Activated naive CD4-positive, alpha-beta T cell treated with anti-CD3 and anti-CD28 coated beads, Interleukin-2, amount 10 ng/mL, durations not matched to agents 7 days and 5 days (primary cell): ENCODE measurements at regions of chr14 and their contacts with region 1.

Region 1: DNA sequence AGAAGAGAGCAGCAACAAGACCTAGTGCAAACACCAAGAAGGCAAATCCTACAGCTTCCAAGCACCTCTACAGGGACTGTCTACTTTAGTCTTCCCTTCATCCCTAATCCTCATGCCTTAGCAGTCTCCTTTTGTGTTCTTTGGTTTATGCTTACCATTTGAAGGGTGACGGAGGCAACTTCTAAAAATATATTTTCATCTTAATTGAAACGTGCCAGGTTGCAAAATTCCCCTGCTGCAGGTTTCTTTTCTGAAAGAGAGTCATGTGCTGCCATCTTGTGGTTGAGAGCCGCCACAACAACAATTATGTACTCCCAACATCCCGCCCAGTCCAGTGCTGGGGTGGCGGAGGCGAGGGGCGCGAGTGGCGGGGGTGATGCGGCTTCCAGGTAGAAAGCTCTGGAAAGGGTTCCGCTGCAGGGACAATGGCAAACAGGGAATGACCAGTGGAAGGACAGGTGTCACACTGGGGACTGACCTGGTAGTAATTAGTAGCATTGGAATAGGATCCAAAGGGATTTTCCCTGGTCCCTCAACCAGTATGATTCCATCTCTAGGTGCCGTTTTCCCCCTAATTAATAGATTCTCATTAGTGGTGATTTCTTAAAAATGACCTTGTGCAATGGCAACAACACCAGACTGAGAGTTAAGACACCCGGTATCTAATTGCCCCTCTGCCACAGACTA is 80.3 kb upstream of the GNG2 start:
- DNase-seq: peak; percentile 81
- H3K4me3 Mint-ChIP-seq: no peak overlapping the region
- H3K27ac Mint-ChIP-seq: no peak overlapping the region
- H3K4me1 Mint-ChIP-seq: peaks cover 20% of the 10 kb centered on the region
- H3K27me3 Mint-ChIP-seq: peaks cover 39% of the 10 kb centered on the region

Region 2: GRCh38 chr14:51283402-51284085 is 496.6 kb before region 1 on chr14:
- CTCF ChIA-PET with region 1: interaction called, 46 read pairs
- DNase-seq: no peak
- H3K4me3 Mint-ChIP-seq: no peak overlapping the region
- H3K27ac Mint-ChIP-seq: no peak overlapping the region
- H3K4me1 Mint-ChIP-seq: no peaks in the 10 kb centered on the region
- H3K27me3 Mint-ChIP-seq: no peaks in the 10 kb centered on the region

Region 3: DNA sequence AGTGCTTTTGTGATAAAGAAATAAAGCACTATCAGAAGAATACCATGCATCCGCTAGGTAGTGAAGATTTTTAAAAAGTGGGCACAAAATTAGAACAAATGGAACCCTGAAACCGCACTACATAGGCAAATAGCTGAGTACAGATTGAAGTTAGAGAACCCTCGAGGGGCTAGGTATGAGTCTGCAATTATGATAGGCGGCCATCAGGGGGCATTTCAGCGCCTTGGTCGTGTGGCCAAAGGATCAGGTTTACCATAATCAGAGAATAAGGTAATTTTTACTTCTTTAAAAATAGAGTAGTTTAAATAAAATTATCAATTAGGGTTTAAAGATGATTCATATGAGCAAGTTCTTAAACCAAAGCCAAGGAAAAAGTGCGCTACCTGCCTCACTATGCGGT is 410.3 kb before region 1 on chr14:
- CTCF ChIA-PET with region 1: interaction called, 19 read pairs
- DNase-seq: peak; percentile 37
- H3K4me3 Mint-ChIP-seq: no peak overlapping the region
- H3K27ac Mint-ChIP-seq: no peak overlapping the region
- H3K4me1 Mint-ChIP-seq: no peaks in the 10 kb centered on the region
- H3K27me3 Mint-ChIP-seq: no peaks in the 10 kb centered on the region

Region 4: GRCh38 chr14:51651388-51652167 is 128.6 kb before region 1 on chr14 and contains the start of gene FRMD6:
- CTCF ChIA-PET with region 1: interaction called, 26 read pairs
- DNase-seq: peak; percentile 90
- H3K4me3 Mint-ChIP-seq: peak within 1 kb of the TSS; percentile 81
- H3K27ac Mint-ChIP-seq: peak within 1 kb of the TSS; percentile 82
- H3K4me1 Mint-ChIP-seq: peaks cover 30% of the 10 kb centered on the region
- H3K27me3 Mint-ChIP-seq: peaks cover 30% of the 10 kb centered on the region

Region 5: GRCh38 chr14:51979088-51979709 is 199.1 kb after region 1 on chr14:
- CTCF ChIA-PET with region 1: interaction called, 38 read pairs
- DNase-seq: peak; percentile 87
- H3K4me3 Mint-ChIP-seq: no peak overlapping the region
- H3K27ac Mint-ChIP-seq: no peak overlapping the region
- H3K4me1 Mint-ChIP-seq: peaks cover 12% of the 10 kb centered on the region
- H3K27me3 Mint-ChIP-seq: peaks cover 11% of the 10 kb centered on the region